ENCODE measurements at regions of chr15 and their contacts with region 1.

Region 1: DNA sequence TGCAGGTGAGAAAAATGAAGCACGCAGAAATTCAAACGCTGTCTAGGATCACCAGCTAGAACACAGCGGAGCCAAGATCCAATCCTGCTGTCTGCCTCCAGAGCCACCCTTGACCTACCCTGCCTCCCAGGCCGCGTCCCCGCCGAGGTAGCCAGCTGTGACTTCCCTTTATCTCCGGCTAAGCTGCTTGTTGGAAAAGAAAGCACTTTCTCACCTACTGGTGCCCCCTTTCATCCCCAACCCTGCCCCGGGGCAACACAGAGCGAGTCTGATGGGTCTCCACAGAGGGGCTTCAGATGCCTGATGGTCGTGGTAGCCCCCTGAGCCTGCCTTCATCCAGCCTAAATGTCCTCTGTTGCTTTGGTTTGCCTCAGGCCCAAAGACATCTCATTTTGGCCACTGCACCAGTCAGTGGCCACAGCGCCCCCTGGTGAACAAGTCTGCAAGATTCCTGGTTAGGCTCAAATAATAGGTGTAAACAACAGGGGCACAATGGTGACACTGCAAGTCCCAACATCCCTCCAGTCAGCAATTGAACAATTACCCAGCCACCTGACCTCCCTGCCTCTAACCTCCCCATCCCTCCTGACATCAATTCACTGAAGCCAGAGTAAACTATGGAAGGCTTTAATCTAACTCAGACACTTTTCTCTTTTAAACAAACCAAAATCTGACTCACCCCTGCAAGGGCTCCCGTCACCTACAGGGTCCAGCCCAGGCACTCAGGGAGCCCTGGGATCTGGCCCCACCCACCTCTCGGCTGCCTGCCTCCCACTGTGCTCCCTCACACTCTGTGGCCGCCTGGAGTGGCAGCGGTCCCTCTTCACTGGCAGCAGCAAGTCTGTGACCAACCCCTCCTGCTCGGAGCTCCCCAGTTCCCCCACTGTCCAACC is 27.3 kb upstream of the BCL2L10 start:
- DNase-seq: peak; percentile 43 to 74 (median 60)
- ATAC-seq: peak in 3 of 4 donors; percentile 45 to 61 (median 61)
- H3K4me3 ChIP-seq: no peak overlapping the region
- H3K27ac ChIP-seq: no peak overlapping the region
- H3K4me1 ChIP-seq: peaks cover 0 to 24% (median 4%) of the 10 kb centered on the region in 12 donors
- H3K27me3 ChIP-seq: no peaks in the 10 kb centered on the region
- CTCF ChIP-seq: peak; percentile 54 to 80 (median 76)
- POLR2A ChIP-seq: no peak

Region 2: GRCh38 chr15:51888593-51889195 is 251.2 kb before region 1 on chr15:
- intact Hi-C with region 1: loop called in 2 of 10 experiments (anchors 5 to 10 kb)
- DNase-seq: no peak
- ATAC-seq: no peak
- H3K4me3 ChIP-seq: no peak overlapping the region
- H3K27ac ChIP-seq: no peak overlapping the region
- H3K4me1 ChIP-seq: peaks cover 0 to 25% (median 10%) of the 10 kb centered on the region in 12 donors
- H3K27me3 ChIP-seq: no peaks in the 10 kb centered on the region
- CTCF ChIP-seq: peak; percentile 65 to 86 (median 74)
- POLR2A ChIP-seq: no peak

Region 3: DNA sequence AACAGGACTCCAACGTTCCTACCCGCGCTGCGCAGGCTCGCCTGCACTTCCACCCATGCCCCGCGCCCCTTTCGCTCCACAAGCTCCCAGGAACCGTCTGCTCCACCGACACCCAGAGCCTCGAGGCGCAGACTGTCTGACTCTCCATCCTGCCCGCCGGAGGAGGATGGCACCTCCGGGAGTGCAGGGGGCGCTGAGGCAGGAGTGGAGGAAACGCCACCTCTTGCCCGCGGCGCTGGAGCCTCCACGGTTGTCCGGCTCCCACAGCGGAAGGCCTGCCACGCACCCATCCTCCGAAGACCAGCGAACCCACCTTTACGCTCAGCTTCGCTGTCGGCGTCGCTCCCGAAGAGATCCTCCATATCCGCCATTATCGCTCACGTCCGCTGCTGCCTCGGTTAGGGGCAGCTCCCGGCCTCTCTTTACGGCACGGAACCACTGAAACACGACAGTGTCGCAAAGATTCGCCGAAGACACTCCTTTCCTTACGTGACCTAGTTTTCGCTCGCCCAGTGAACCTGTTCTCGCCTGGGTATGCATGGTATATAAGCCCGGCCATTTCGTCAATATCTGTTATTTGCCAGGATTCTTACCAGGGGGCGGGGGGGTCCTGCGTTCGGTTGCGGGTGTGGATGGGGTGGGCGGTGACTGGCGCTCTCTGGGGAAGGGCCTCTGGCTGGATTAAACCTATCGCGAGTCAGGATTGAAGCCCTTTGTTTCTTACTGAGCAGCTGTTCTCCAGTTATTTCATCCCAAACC is 168.3 kb before region 1 on chr15 and contains the start of gene LEO1:
- intact Hi-C with region 1: loop called in 1 of 10 experiments (anchors 10 kb)
- DNase-seq: peak; percentile 89 to 95 (median 93)
- ATAC-seq: peak; percentile 90 to 98 (median 98)
- H3K4me3 ChIP-seq: peak within 1 kb of the TSS; percentile 71 to 96 (median 90)
- H3K27ac ChIP-seq: peak within 1 kb of the TSS; percentile 83 to 97 (median 92)
- H3K4me1 ChIP-seq: peaks cover 0 to 24% (median 12%) of the 10 kb centered on the region in 12 donors
- H3K27me3 ChIP-seq: no peaks in the 10 kb centered on the region
- CTCF ChIP-seq: peak in 9 of 12 donors; percentile 7 to 71 (median 37)
- POLR2A ChIP-seq: peak in 1 of 2 donors; percentile 40
- total RNA-seq, gene LEO1: 4.9 to 10.4 (median 8.3) TPM

Region 4: GRCh38 chr15:51982013-51982769 is 157.7 kb before region 1 on chr15:
- intact Hi-C with region 1: loop called in 4 of 10 experiments (anchors 5 to 10 kb)
- DNase-seq: peak in 2 of 5 donors; percentile 22 to 44
- ATAC-seq: peak; percentile 53 to 80 (median 77)
- H3K4me3 ChIP-seq: peak overlapping the region in 9 of 12 donors; percentile 9 to 50 (median 34)
- H3K27ac ChIP-seq: peak overlapping the region; percentile 33 to 79 (median 66)
- H3K4me1 ChIP-seq: peaks cover 0 to 24% (median 17%) of the 10 kb centered on the region in 12 donors
- H3K27me3 ChIP-seq: no peaks in the 10 kb centered on the region
- CTCF ChIP-seq: peak; percentile 24 to 63 (median 53)
- POLR2A ChIP-seq: no peak

Region 5: GRCh38 chr15:52078876-52079700 is 60.8 kb before region 1 on chr15:
- intact Hi-C with region 1: no loop called
- DNase-seq: peak; percentile 78 to 91 (median 83)
- ATAC-seq: peak; percentile 79 to 83 (median 80)
- H3K4me3 ChIP-seq: no peak overlapping the region
- H3K27ac ChIP-seq: no peak overlapping the region
- H3K4me1 ChIP-seq: peaks cover 0 to 26% (median 0%) of the 10 kb centered on the region in 12 donors
- H3K27me3 ChIP-seq: no peaks in the 10 kb centered on the region
- CTCF ChIP-seq: peak; percentile 79 to 92 (median 84)
- POLR2A ChIP-seq: no peak

Region 6: GRCh38 chr15:52308446-52309153 is 168.8 kb after region 1 on chr15:
- intact Hi-C with region 1: no loop called
- DNase-seq: no peak
- ATAC-seq: peak in 3 of 4 donors; percentile 54 to 60 (median 58)
- H3K4me3 ChIP-seq: no peak overlapping the region
- H3K27ac ChIP-seq: no peak overlapping the region
- H3K4me1 ChIP-seq: peaks cover 0 to 13% (median 5%) of the 10 kb centered on the region in 12 donors
- H3K27me3 ChIP-seq: no peaks in the 10 kb centered on the region
- CTCF ChIP-seq: no peak
- POLR2A ChIP-seq: no peak

Region 7: DNA sequence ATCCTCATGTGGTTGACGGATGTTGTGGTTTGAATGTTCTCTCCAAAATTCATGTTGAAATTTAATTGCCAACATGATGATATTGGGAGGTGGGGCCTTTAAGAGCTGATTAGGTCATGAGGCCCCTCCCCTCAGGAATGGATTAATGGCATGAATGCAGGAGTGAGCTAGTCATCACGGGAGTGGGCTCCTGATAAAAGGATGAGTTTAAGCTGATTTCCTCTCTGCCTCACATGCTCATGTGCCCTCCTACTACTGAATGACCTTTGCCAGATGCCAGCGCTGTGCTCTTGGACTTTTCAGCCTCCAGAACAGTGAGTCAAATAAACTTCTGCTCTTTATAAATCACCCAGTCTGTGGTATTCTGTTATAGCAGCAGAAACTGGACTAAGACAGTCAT is 277.7 kb after region 1 on chr15:
- intact Hi-C with region 1: no loop called
- DNase-seq: no peak
- ATAC-seq: peak in 2 of 4 donors; percentile 11 to 31
- H3K4me3 ChIP-seq: no peak overlapping the region
- H3K27ac ChIP-seq: no peak overlapping the region
- H3K4me1 ChIP-seq: peaks cover 0 to 13% (median 0%) of the 10 kb centered on the region in 12 donors
- H3K27me3 ChIP-seq: no peaks in the 10 kb centered on the region
- CTCF ChIP-seq: no peak
- POLR2A ChIP-seq: no peak